Activated CD4-positive, alpha-beta T cell treated with anti-CD3 and anti-CD28 coated beads for 36 hours (primary cell): ENCODE measurements at regions of chr16 and their contacts with region 1.

Region 1: DNA sequence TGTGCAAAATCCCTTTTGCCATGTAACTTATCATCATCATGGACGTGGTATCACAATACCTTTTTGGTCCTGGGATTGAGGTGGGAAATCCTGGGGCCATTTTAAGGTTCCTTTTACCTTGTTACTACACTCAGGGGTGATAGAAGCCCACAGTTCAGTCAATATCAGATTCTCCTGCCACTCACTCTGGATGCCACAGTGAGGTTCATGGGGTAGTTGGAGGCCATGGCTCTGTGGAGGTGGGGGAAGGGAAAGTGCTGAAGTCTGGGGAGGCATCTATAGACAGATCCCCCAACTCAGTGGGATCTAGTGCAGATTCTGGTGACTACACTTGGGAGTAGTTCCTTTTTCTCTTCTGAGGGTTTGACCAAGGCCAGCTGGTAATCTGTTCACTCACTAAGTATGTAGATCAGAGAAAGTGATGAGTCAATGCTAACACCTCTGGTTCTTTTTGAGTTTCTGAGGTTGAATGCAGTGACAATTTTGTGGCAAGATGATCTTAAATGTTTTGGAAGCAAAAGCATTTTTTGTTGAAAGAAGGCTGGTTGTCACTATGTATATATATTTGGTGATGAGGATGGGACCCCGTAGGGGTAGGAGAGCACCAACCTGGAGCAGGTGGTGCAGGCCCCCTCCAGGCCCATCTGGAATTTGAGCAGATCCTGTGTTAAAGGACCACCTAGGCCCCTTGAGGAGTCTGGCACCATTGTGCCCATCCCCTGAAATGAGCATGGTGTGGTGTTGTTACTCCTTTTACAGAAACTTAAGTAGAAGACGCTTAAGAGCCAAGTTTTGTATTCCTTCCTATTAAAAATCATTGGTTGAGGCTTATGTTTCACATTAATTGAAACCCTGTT is 18.8 kb upstream of the IRF8 start:
- DNase-seq: peak; percentile 31
- ATAC-seq: peak; percentile 93
- H3K4me3 Mint-ChIP-seq: no peak overlapping the region
- H3K27ac Mint-ChIP-seq: no peak overlapping the region
- H3K4me1 Mint-ChIP-seq: peaks cover 33% of the 10 kb centered on the region
- H3K27me3 Mint-ChIP-seq: peaks cover 31% of the 10 kb centered on the region

Region 2: DNA sequence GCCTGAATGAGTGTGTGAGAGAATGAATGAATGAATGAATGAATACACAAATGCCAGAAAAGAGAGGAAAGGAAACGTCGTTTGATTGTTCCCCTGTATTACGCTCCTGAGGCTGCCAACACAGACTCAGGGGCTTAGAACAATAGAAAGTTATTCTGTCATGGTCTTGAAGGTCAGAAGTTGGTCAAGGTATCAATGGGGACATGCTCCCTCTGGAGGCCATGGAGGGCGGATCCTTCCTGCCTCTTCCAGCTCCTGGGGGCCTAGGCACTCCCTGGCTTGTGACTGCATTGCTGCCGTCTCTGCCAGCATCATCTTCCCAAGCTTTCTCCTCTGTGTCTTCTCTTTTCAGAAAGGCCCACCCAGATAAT is 1836.1 kb before region 1 on chr16:
- CTCF ChIA-PET with region 1: no interaction called
- POLR2A ChIA-PET with region 1: no interaction called
- intact Hi-C with region 1: no loop called
- DNase-seq: peak; percentile 23
- ATAC-seq: peak; percentile 42
- H3K4me3 Mint-ChIP-seq: no peak overlapping the region
- H3K27ac Mint-ChIP-seq: no peak overlapping the region
- H3K4me1 Mint-ChIP-seq: no peaks in the 10 kb centered on the region
- H3K27me3 Mint-ChIP-seq: peaks cover 12% of the 10 kb centered on the region

Region 3: GRCh38 chr16:85869785-85870558 is 10.2 kb before region 1 on chr16:
- CTCF ChIA-PET with region 1: no interaction called
- POLR2A ChIA-PET with region 1: no interaction called
- intact Hi-C with region 1: loop called in 1 of 2 experiments (anchors 1 kb)
- DNase-seq: no peak
- ATAC-seq: peak; percentile 19
- H3K4me3 Mint-ChIP-seq: peak overlapping the region; percentile 0
- H3K27ac Mint-ChIP-seq: peak overlapping the region; percentile 6
- H3K4me1 Mint-ChIP-seq: peaks cover 32% of the 10 kb centered on the region
- H3K27me3 Mint-ChIP-seq: peaks cover 7% of the 10 kb centered on the region

Region 4: DNA sequence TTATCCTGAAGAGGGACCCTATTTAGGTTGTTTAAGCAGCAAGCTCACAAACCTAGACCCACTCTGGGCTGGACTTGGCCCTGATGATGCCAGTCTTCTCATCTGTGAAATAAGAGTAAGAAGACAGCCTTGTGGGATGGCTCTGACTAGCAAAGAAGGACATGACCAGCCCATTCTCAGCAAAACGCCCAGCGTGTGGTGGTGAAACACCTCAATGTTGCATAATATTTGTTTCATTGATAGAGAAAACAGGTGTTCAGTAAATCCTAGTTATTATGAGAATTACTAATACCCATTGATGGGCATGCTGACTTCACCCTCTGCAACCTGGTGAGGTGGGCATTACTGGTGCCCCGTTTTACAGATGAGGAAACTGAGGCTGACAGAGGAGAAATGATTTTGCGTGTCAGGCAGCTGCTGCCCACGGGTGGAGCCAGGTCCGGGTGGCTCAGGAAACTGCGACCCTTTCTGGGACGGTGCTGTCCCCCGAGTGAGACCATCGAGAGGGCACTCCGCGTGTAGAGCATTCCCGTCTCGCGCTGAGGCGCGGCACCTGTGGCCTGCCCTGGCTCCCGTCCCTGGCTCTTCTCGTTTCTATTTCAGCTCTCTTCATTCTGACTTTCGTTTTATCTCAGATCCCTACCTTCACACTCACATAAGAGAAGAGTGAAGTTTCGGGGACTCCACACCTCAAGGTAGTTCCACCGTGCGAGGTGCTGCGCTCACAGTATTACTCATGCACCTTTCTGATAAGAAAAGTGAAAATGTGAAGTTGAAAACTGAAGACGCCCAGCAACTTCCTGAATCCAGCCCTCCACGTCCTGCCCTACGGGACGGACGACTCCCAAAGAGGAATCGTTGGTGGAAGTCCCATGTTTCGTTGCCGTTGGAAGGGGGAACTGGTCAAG is 67.3 kb after region 1 on chr16:
- CTCF ChIA-PET with region 1: interaction called, 3 read pairs
- POLR2A ChIA-PET with region 1: interaction called, 3 read pairs
- intact Hi-C with region 1: loop called in 1 of 2 experiments (anchors 2 kb)
- DNase-seq: peak; percentile 80
- ATAC-seq: peak; percentile 90
- H3K4me3 Mint-ChIP-seq: peak overlapping the region; percentile 29
- H3K27ac Mint-ChIP-seq: peak overlapping the region; percentile 58
- H3K4me1 Mint-ChIP-seq: peaks cover 72% of the 10 kb centered on the region
- H3K27me3 Mint-ChIP-seq: peaks cover 9% of the 10 kb centered on the region